Sigmoid colon (tissue), 7 donors: ENCODE measurements at regions of chr5 and their contacts with region 1.

Region 1: GRCh38 chr5:112551419-112552032 is 132.4 kb upstream of the EPB41L4A start:
- DNase-seq: no peak
- H3K4me3 ChIP-seq: no peak overlapping the region
- H3K27ac ChIP-seq: peak overlapping the region in 2 of 4 donors; percentile 21 to 25
- H3K4me1 ChIP-seq: peaks cover 0 to 18% (median 12%) of the 10 kb centered on the region in 4 donors
- H3K27me3 ChIP-seq: no peaks in the 10 kb centered on the region
- CTCF ChIP-seq: peak; percentile 51 to 78 (median 68)
- EP300 ChIP-seq: no peak
- POLR2A ChIP-seq: no peak

Region 2: DNA sequence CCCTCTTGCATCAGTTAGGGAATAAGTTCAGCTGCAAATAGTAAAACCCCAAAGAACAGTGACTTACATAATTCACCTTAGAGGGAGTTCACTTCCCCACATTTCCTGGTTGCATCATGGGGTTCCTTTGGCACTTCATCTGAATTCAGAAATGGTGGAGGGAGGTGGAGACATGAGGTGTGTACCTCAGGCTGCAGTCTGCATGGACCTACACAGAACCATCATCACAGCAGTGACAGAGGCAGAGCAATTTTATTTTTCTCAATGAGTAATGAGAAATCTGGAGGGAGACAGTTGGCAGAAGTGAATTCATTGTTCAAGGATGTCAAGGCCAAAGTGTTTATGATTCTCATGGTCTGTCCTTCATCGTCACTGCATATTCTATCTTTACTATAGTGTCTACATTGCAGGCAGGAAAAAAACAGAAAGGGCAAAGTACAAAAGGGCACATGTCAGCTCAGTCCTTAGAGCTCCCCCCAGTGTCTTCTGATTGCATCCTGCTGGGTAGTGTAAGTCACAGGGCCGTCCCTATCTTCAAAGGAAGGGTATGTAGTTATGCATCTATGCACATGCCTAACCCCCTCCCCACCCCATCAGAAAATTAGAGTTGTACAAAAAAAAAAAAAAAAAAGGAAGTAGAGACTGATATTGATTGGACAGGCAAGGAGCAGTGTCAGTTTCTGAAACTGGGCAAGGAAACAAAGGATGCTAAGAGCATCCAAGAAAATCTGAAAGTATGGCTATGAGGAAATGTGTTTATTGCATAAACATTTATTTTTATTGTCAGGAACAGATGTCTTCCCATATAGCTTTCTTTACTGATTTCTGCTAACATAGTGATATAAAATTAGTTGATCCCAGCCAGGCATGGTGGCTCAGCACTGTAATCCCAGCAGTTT is 53.5 kb after region 1 on chr5:
- intact Hi-C with region 1: loop called (anchors 5 kb)
- DNase-seq: no peak
- H3K4me3 ChIP-seq: no peak overlapping the region
- H3K27ac ChIP-seq: no peak overlapping the region
- H3K4me1 ChIP-seq: no peaks in the 10 kb centered on the region
- H3K27me3 ChIP-seq: no peaks in the 10 kb centered on the region
- CTCF ChIP-seq: no peak
- EP300 ChIP-seq: no peak
- POLR2A ChIP-seq: no peak

Region 3: DNA sequence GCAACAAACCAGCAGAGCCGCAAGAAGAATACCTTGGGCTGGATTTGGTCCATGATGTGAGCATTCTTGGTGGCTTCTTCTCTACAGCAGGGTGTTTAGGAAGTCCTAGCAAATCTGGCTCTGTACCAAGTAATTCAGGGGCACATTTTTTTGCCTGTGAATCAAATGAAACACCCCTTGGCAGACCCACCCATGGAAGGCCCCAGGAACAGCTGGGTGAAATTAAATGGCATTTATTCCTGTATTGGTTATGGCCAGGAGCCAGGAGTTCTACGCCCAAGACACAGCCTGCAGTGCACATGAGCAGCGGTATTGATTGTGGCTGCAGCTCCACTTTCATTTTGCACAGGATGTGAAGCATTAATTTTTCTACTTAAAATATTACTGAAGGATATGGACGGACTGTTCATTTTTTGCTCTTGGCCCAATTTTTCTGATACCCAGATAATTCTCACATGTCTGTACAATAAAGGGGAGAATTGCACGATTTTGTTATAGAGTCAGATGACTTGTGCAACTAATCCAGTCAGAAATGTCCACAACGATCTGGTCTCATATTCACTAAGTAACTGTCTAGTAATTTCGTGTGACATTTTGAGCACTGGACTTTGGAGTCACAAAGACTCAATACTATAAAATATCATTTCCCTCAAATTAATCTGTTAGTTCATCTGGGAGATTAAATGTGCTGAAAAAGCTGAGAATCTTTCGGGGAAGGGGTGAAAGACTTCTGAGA is 65.5 kb after region 1 on chr5:
- intact Hi-C with region 1: no loop called
- DNase-seq: no peak
- H3K4me3 ChIP-seq: no peak overlapping the region
- H3K27ac ChIP-seq: no peak overlapping the region
- H3K4me1 ChIP-seq: no peaks in the 10 kb centered on the region
- H3K27me3 ChIP-seq: no peaks in the 10 kb centered on the region
- CTCF ChIP-seq: no peak
- EP300 ChIP-seq: no peak
- POLR2A ChIP-seq: no peak

Region 4: GRCh38 chr5:112757468-112758208 is 206.1 kb after region 1 on chr5:
- intact Hi-C with region 1: loop called (anchors 1 kb)
- DNase-seq: no peak
- H3K4me3 ChIP-seq: peak overlapping the region in 1 of 4 donors; percentile 1
- H3K27ac ChIP-seq: no peak overlapping the region
- H3K4me1 ChIP-seq: peaks cover 0 to 15% (median 10%) of the 10 kb centered on the region in 4 donors
- H3K27me3 ChIP-seq: no peaks in the 10 kb centered on the region
- CTCF ChIP-seq: peak; percentile 69 to 79 (median 74)
- EP300 ChIP-seq: no peak
- POLR2A ChIP-seq: no peak

Region 5: DNA sequence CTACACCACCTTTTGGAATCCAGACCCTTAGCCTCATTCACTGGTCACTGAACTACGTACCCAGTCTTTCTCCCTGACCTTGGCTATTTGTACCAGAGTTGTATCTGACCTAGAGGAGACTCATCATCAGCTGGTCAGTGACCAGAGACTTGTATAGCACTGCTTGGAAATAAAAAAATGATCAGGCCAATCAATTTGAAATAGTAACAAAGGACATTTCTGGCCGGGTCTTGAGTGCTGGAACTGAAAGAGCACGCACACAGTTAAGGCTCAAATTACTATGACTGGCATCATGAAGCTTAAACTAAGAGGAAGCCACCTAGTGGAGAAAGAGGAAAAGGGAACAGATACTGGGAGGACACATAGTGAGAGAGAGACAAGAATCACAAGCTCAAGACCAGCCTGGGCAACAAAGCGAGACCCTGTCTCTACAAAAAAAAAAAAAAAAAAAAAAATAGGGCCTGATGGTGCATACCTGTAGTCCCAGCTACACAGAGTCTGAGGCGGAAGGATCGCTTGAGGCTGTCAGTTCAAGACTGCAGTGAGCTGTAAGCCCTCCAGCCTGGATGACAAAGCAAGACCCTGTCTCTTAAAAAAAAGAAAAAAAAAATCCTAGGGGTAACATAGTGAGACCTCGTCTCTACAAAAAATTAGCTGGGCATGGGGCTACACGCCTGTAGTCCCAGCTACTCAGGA is 296.7 kb after region 1 on chr5:
- intact Hi-C with region 1: loop called (anchors 5 kb)
- DNase-seq: no peak
- H3K4me3 ChIP-seq: no peak overlapping the region
- H3K27ac ChIP-seq: no peak overlapping the region
- H3K4me1 ChIP-seq: peaks cover 0 to 4% (median 0%) of the 10 kb centered on the region in 4 donors
- H3K27me3 ChIP-seq: no peaks in the 10 kb centered on the region
- CTCF ChIP-seq: peak in 3 of 4 experiments; percentile 25 to 44 (median 40)
- EP300 ChIP-seq: no peak
- POLR2A ChIP-seq: no peak

Region 6: GRCh38 chr5:112921833-112922817 is 370.6 kb after region 1 on chr5 and contains the start of gene REEP5:
- intact Hi-C with region 1: loop called (anchors 5 kb)
- DNase-seq: peak; percentile 90
- H3K4me3 ChIP-seq: peak within 1 kb of the TSS; percentile 68 to 96 (median 83)
- H3K27ac ChIP-seq: peak within 1 kb of the TSS; percentile 93 to 99 (median 95)
- H3K4me1 ChIP-seq: peaks cover 0 to 44% (median 42%) of the 10 kb centered on the region in 4 donors
- H3K27me3 ChIP-seq: no peaks in the 10 kb centered on the region
- CTCF ChIP-seq: peak; percentile 26 to 84 (median 52)
- EP300 ChIP-seq: no peak
- POLR2A ChIP-seq: peak; percentile 67 to 78
- total RNA-seq, gene REEP5: 67.6 to 86.0 (median 71.8) TPM